ENCODE measurements at regions of chr19 and their contacts with region 1.

Region 1: DNA sequence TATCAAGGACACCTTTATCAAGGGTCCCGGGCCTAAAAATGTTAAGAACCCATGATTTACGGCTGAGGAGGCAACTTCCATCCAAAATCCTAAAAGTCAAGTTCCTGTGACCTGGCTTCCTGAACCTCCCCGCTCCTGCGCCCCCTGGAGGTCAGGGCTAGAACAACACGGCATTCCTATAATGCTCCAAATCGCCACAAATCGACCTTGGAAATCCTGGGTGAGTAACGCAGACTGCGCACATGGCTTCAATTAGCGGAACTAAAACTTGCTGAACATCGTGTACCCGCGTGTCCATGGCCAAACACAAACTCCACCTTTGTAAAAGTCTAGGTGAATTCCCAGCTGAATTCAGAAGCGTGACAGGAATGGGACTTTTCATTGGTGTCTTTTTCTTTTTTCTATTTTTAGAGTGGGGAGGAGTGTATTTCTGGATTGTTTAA is 4.3 kb upstream of the C5AR1 start:
- DNase-seq: peak; percentile 80
- H3K4me3 ChIP-seq: no peak overlapping the region
- H3K27ac ChIP-seq: no peak overlapping the region
- H3K4me1 ChIP-seq: no peaks in the 10 kb centered on the region
- H3K27me3 ChIP-seq: no peaks in the 10 kb centered on the region
- CTCF ChIP-seq: peak; percentile 97

Region 2: GRCh38 chr19:46288896-46289588 is 1016.3 kb before region 1 on chr19:
- CTCF ChIA-PET with region 1: no interaction called
- POLR2A ChIA-PET with region 1: no interaction called
- intact Hi-C with region 1: no loop called
- DNase-seq: peak; percentile 68
- H3K4me3 ChIP-seq: no peak overlapping the region
- H3K27ac ChIP-seq: no peak overlapping the region
- H3K4me1 ChIP-seq: no peaks in the 10 kb centered on the region
- H3K27me3 ChIP-seq: no peaks in the 10 kb centered on the region
- CTCF ChIP-seq: no peak

Region 3: GRCh38 chr19:47560999-47561398 is 255.7 kb after region 1 on chr19:
- CTCF ChIA-PET with region 1: interaction called, 14 read pairs
- POLR2A ChIA-PET with region 1: no interaction called
- intact Hi-C with region 1: no loop called
- DNase-seq: no peak
- H3K4me3 ChIP-seq: no peak overlapping the region
- H3K27ac ChIP-seq: no peak overlapping the region
- H3K4me1 ChIP-seq: no peaks in the 10 kb centered on the region
- H3K27me3 ChIP-seq: no peaks in the 10 kb centered on the region
- CTCF ChIP-seq: no peak

Measured in A673 (cell line).